ENCODE measurements at regions of chr10 and their contacts with region 1.

Region 1: GRCh38 chr10:60944159-60944909 is at the start of gene RHOBTB1:
- DNase-seq: peak; percentile 81 to 82
- ATAC-seq: peak; percentile 91 to 95 (median 92)
- H3K4me3 ChIP-seq: peak within 1 kb of the TSS; percentile 72 to 98 (median 86)
- H3K27ac ChIP-seq: peak within 1 kb of the TSS; percentile 93 to 100 (median 98)
- H3K4me1 ChIP-seq: peaks cover 3 to 43% (median 28%) of the 10 kb centered on the region in 9 donors
- H3K27me3 ChIP-seq: no peaks in the 10 kb centered on the region
- CTCF ChIP-seq: no peak
- total RNA-seq, gene RHOBTB1: 7.9 to 20.5 (median 13.4) TPM

Region 2: DNA sequence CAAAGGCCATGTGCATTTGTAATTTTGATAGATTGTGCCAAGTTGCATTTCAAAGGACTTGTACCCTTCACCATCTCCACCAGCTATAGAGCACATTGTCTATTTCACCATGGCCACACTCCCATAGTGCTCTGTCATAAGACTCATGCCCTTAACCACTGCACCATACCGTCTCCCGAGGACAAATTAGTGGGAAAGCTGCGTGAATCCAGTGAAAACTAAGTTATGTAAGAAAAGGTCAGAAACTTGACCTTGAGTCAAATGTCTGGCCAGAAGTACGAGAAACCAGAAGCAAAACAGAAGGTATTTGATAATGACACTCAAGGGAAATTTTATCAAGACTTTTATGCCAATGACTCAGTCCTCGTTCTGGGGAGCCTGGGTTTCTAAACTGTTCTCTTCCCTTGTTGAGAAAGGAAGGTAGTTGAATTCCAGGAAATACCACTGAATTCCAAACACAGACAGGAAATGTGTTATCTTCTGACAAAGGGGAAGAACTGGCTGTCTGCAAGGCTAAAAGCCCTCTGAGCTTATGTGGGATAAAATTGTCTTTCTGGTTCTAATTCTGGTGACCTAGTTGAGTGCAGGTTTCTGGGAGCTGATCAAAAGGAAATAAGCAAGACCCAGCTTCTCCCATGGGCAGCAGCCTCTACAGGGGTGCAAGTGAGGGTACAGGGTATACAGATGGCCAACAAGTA is 116.4 kb before region 1 on chr10:
- intact Hi-C with region 1: loop called in 1 of 10 experiments (anchors 5 kb)
- DNase-seq: peak in 1 of 2 donors; percentile 45
- ATAC-seq: peak; percentile 73 to 94 (median 90)
- H3K4me3 ChIP-seq: no peak overlapping the region
- H3K27ac ChIP-seq: peak overlapping the region in 9 of 10 donors; percentile 11 to 79 (median 57)
- H3K4me1 ChIP-seq: peaks cover 0 to 34% (median 24%) of the 10 kb centered on the region in 9 donors
- H3K27me3 ChIP-seq: no peaks in the 10 kb centered on the region
- CTCF ChIP-seq: no peak

Region 3: GRCh38 chr10:60883187-60883586 is 61.1 kb before region 1 on chr10:
- intact Hi-C with region 1: loop called in 2 of 10 experiments (anchors 5 kb)
- DNase-seq: peak in 1 of 2 donors; percentile 38
- ATAC-seq: peak; percentile 67 to 95 (median 90)
- H3K4me3 ChIP-seq: no peak overlapping the region
- H3K27ac ChIP-seq: peak overlapping the region in 7 of 10 donors; percentile 2 to 64 (median 52)
- H3K4me1 ChIP-seq: peaks cover 0 to 29% (median 11%) of the 10 kb centered on the region in 9 donors
- H3K27me3 ChIP-seq: no peaks in the 10 kb centered on the region
- CTCF ChIP-seq: peak; percentile 29 to 70 (median 55)

Region 4: GRCh38 chr10:60896033-60896432 is 48.3 kb before region 1 on chr10:
- intact Hi-C with region 1: loop called in 5 of 10 experiments (anchors 2 to 10 kb)
- DNase-seq: no peak
- ATAC-seq: peak in 5 of 8 donors; percentile 34 to 73 (median 59)
- H3K4me3 ChIP-seq: no peak overlapping the region
- H3K27ac ChIP-seq: peak overlapping the region in 9 of 10 donors; percentile 22 to 87 (median 67)
- H3K4me1 ChIP-seq: peaks cover 3 to 58% (median 27%) of the 10 kb centered on the region in 9 donors
- H3K27me3 ChIP-seq: no peaks in the 10 kb centered on the region
- CTCF ChIP-seq: no peak

Region 5: GRCh38 chr10:60901561-60902235 is 42.6 kb before region 1 on chr10:
- intact Hi-C with region 1: loop called in 7 of 10 experiments (anchors 2 to 10 kb)
- DNase-seq: peak; percentile 76 to 84
- ATAC-seq: peak; percentile 73 to 96 (median 90)
- H3K4me3 ChIP-seq: no peak overlapping the region
- H3K27ac ChIP-seq: peak overlapping the region in 9 of 10 donors; percentile 13 to 74 (median 61)
- H3K4me1 ChIP-seq: peaks cover 5 to 69% (median 48%) of the 10 kb centered on the region in 9 donors
- H3K27me3 ChIP-seq: no peaks in the 10 kb centered on the region
- CTCF ChIP-seq: no peak